Uterus (tissue), 4 donors: ENCODE measurements at regions of chr3 and their contacts with region 1.

Region 1: DNA sequence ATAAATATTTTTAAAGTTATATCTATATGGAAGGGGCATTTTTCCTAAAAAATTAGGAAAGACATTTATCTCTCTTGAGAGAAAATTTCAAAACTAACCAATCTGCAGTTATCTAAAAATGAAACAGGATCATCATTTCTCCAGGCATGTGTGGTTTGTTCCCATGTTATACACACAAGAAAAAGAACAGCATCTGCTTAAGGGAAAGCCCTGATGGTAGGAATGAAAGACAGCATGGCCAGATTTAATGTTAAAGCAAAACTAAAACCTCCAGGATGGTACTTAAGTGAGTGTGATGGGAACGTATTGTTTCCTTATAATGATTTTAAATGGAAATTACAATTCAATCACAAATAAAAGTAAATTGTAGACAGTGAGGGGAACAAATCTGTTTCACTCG is 46.2 kb upstream of the GYG1 start:
- DNase-seq: no peak
- H3K4me3 ChIP-seq: no peak overlapping the region
- H3K27ac ChIP-seq: no peak overlapping the region
- H3K4me1 ChIP-seq: no peaks in the 10 kb centered on the region
- H3K27me3 ChIP-seq: no peaks in the 10 kb centered on the region
- CTCF ChIP-seq: no peak
- POLR2A ChIP-seq: no peak

Region 2: GRCh38 chr3:148861277-148861869 is 83.7 kb before region 1 on chr3:
- intact Hi-C with region 1: loop called (anchors 5 kb)
- DNase-seq: no peak
- H3K4me3 ChIP-seq: no peak overlapping the region
- H3K27ac ChIP-seq: no peak overlapping the region
- H3K4me1 ChIP-seq: no peaks in the 10 kb centered on the region
- H3K27me3 ChIP-seq: no peaks in the 10 kb centered on the region
- CTCF ChIP-seq: peak; percentile 50 to 69 (median 60)
- POLR2A ChIP-seq: no peak

Region 3: GRCh38 chr3:149086232-149086988 is 141.3 kb after region 1 on chr3 and contains the start of gene HLTF:
- intact Hi-C with region 1: no loop called
- DNase-seq: peak; percentile 93 to 95
- H3K4me3 ChIP-seq: peak within 1 kb of the TSS; percentile 73 to 79
- H3K27ac ChIP-seq: peak within 1 kb of the TSS; percentile 74 to 77
- H3K4me1 ChIP-seq: peaks cover 0 to 8% of the 10 kb centered on the region in 2 donors
- H3K27me3 ChIP-seq: no peaks in the 10 kb centered on the region
- CTCF ChIP-seq: no peak
- POLR2A ChIP-seq: peak; percentile 64 to 66
- total RNA-seq, gene HLTF: 21.5 to 80.1 (median 38.0) TPM